ENCODE measurements at regions of chr6 and their contacts with region 1.

Region 1: GRCh38 chr6:131627724-131628682 is at the start of gene MED23:
- DNase-seq: peak; percentile 70
- H3K4me3 ChIP-seq: peak within 1 kb of the TSS; percentile 85
- CTCF ChIP-seq: peak; percentile 100

Region 2: DNA sequence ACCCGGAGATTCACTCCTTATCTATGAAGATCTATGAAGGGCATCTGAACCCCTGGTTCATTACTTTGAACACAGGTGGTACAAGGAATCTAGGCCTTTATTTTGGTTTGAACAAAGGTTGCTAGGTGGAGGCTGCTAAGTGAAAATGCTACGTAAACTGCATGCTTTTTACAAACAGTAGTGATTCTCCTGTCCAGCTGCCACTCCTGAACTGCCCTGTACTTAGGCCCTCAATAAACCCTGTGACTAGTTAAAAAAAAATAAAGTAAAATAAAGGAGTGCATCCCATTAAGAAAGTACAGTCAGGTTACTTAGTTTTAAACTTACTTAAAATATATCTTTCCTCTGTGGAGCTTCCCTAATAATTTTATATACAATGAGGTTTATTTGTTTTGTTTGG is 82.7 kb before region 1 on chr6:
- CTCF ChIA-PET with region 1: no interaction called
- POLR2A ChIA-PET with region 1: no interaction called
- DNase-seq: no peak
- H3K4me3 ChIP-seq: no peak overlapping the region
- CTCF ChIP-seq: no peak

Region 3: DNA sequence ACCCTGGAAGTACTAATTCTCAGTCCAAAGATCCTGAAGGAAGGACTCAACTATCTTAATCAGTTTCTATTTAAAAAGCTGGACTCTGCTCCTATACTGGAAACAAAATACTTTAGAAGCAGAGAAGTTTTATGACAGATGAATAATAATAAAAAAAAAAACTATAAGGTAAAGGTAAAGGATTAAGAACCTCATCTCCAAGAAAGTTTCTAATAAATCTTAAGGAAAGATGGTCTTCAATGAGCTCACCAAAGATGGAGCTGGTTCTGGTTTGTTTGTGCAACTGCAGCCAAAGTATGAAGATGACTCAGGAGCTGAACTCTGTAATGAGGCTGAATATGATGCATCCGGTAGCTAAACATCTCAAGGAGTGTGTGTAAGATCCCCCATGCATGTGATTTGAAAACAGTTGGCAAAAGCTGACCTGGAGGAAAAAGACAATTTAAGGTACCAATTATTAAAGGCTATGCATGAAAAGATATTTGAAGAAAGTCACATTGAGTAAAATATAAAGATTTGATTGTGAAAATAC is 25.2 kb before region 1 on chr6:
- CTCF ChIA-PET with region 1: interaction called, 59 read pairs
- POLR2A ChIA-PET with region 1: interaction called, 4 read pairs
- DNase-seq: peak; percentile 83
- H3K4me3 ChIP-seq: no peak overlapping the region
- CTCF ChIP-seq: no peak

Region 4: GRCh38 chr6:131646249-131646670 is 18.3 kb after region 1 on chr6:
- CTCF ChIA-PET with region 1: interaction called, 44 read pairs
- POLR2A ChIA-PET with region 1: no interaction called
- DNase-seq: no peak
- H3K4me3 ChIP-seq: no peak overlapping the region
- CTCF ChIP-seq: no peak

Region 5: DNA sequence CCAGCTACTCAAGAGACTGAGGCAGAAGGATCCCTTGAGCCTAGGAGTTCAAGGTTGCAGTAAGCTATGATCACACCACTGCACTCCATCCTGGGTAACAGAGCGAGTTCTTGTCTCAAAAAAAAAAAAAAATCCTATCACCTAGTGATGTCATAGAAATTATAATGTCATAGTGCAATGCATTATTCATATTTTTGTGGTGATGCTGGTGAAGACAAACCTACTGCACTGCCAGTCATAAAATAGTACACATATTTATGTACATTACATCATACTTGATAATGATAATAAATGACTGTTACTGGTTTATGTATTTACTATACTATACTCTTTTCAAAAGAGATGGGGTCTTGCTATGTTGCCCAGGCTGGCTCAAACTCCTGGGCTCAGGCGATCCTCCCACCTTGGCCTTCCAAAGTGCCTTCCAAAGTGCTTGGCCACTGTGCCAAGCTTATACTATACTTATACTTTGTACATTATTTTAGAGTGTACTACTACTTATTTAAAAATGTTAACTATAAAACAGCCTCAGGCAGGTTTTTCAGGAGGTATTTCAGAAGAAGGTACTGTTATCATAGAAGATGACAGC is 35.7 kb after region 1 on chr6:
- CTCF ChIA-PET with region 1: interaction called, 10 read pairs
- POLR2A ChIA-PET with region 1: no interaction called
- DNase-seq: no peak
- H3K4me3 ChIP-seq: no peak overlapping the region
- CTCF ChIP-seq: no peak

Measured in AG04449 (cell line).